MCF 10A (cell line): ENCODE measurements at regions of chr15 and their contacts with region 1.

Region 1: GRCh38 chr15:83283138-83283812 is 1.2 kb downstream of the BNC1 start:
- DNase-seq: no peak
- H3K4me3 Mint-ChIP-seq: peak overlapping the region; percentile 99
- H3K27ac Mint-ChIP-seq: peak overlapping the region; percentile 99
- H3K4me1 Mint-ChIP-seq: peaks cover 58% of the 10 kb centered on the region
- H3K27me3 Mint-ChIP-seq: no peaks in the 10 kb centered on the region
- CTCF ChIP-seq: no peak

Region 2: DNA sequence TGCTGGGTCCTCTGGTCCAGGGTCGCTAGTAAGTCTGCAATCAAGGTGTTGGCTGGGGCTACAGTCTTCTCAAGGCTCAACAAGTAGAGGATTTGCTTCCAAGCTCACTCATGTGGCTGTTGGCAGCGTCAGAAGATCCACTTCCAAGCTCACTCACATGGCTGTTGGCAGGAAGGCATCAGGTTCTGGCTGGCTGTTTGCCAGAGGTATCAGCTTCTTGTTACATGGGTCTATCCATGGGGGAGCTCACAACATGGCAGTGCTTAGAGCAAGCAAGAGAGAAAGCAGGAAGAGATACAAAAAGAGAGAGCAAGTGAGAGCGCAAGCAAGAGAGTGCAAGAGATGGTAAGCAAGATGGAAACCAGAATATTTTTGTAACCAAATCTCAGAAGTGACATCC is 16.2 kb after region 1 on chr15:
- CTCF ChIA-PET with region 1: interaction called, 10 read pairs
- POLR2A ChIA-PET with region 1: interaction called, 269 read pairs
- intact Hi-C with region 1: no loop called
- DNase-seq: peak; percentile 37
- H3K4me3 Mint-ChIP-seq: no peak overlapping the region
- H3K27ac Mint-ChIP-seq: no peak overlapping the region
- H3K4me1 Mint-ChIP-seq: peaks cover 10% of the 10 kb centered on the region
- H3K27me3 Mint-ChIP-seq: no peaks in the 10 kb centered on the region
- CTCF ChIP-seq: no peak

Region 3: DNA sequence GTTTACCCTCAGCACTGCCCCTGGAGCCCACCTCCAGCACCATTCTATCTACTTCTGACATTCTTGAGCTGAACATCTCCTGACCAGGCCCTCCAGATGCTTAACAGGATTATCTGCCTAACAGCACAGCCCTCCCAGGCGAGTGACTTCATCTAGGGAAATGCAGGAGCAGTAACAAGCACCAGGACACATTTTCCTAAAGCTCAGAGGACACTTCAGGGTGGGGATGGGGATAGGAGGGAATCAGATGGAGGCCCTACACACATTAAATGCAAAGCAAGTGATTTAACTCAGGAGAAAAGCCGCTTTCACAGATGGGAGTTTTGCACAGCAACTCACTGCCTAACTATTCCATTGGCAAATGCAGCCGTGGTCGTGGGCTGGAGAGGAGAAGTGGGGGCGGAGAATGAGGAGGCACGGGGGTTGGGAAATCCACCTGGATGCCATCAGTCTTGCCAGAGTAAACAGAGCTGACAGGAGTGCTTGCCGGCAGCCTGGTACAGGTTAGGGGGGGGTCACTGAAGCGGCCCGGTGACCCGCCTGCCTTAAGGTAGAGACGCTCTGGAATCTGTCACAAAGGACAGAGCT is 22.5 kb after region 1 on chr15:
- CTCF ChIA-PET with region 1: interaction called, 10 read pairs
- POLR2A ChIA-PET with region 1: interaction called, 269 read pairs
- intact Hi-C with region 1: no loop called
- DNase-seq: peak; percentile 89
- H3K4me3 Mint-ChIP-seq: peak overlapping the region; percentile 24
- H3K27ac Mint-ChIP-seq: peak overlapping the region; percentile 46
- H3K4me1 Mint-ChIP-seq: peaks cover 36% of the 10 kb centered on the region
- H3K27me3 Mint-ChIP-seq: no peaks in the 10 kb centered on the region
- CTCF ChIP-seq: no peak

Region 4: GRCh38 chr15:83365370-83365938 is 82.2 kb after region 1 on chr15:
- CTCF ChIA-PET with region 1: interaction called, 11 read pairs
- POLR2A ChIA-PET with region 1: interaction called, 47 read pairs
- intact Hi-C with region 1: loop called (anchors 1 kb)
- DNase-seq: peak; percentile 72
- H3K4me3 Mint-ChIP-seq: peak overlapping the region; percentile 74
- H3K27ac Mint-ChIP-seq: peak overlapping the region; percentile 95
- H3K4me1 Mint-ChIP-seq: peaks cover 29% of the 10 kb centered on the region
- H3K27me3 Mint-ChIP-seq: no peaks in the 10 kb centered on the region
- CTCF ChIP-seq: no peak

Region 5: DNA sequence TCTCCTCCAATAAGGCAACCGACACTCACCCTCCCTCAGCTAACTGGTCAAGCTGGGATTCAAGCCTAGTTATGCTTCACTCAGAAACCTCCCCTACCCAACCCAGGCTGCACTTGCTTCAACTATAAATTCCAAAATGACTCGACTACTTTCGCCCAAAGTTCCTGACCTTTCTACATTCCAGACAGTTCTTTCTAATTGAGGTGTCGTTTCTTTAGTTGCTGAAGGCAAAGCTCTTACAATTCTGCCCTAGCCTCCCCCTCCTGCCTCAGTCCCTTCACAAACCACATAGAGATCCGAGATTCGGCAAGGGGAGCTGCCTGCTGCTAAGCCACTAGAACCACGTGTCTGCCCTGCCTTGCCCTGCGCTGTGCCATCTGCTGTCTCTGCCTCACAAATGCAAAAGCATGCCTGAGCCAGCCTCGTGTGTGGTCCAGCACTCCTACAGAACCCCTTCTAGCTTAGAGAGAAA is 89.2 kb after region 1 on chr15:
- CTCF ChIA-PET with region 1: interaction called, 4 read pairs
- POLR2A ChIA-PET with region 1: interaction called, 47 read pairs
- intact Hi-C with region 1: no loop called
- DNase-seq: peak; percentile 24
- H3K4me3 Mint-ChIP-seq: no peak overlapping the region
- H3K27ac Mint-ChIP-seq: no peak overlapping the region
- H3K4me1 Mint-ChIP-seq: peaks cover 23% of the 10 kb centered on the region
- H3K27me3 Mint-ChIP-seq: no peaks in the 10 kb centered on the region
- CTCF ChIP-seq: no peak